ENCODE measurements at regions of chr12 and their contacts with region 1.

Region 1: GRCh38 chr12:50734409-50735263 is 29.3 kb upstream of the ATF1 start:
- DNase-seq: peak; percentile 27
- H3K4me3 Mint-ChIP-seq: no peak overlapping the region
- H3K27ac Mint-ChIP-seq: no peak overlapping the region
- H3K4me1 Mint-ChIP-seq: no peaks in the 10 kb centered on the region
- H3K27me3 Mint-ChIP-seq: no peaks in the 10 kb centered on the region

Region 2: DNA sequence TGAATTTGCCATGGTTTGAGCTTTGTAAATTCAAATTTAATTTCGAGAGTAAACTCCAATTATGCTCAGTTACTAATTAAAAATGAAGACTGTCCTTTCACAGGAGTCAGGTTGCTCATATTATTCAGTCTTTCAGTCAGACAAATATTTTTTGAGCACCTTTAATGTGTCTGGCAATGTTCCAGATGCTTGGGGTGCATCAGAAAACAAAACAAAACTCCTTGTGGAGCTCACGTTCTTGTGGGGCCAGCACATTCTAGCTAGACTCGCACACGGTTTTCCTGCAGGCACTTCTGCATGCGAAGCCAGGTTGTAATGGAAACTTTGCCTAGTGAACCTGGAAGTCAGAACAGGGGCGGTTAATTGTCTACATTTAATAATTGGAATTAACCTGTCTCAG is 34.7 kb before region 1 on chr12:
- CTCF ChIA-PET with region 1: no interaction called
- POLR2A ChIA-PET with region 1: no interaction called
- DNase-seq: no peak
- H3K4me3 Mint-ChIP-seq: no peak overlapping the region
- H3K27ac Mint-ChIP-seq: no peak overlapping the region
- H3K4me1 Mint-ChIP-seq: no peaks in the 10 kb centered on the region
- H3K27me3 Mint-ChIP-seq: no peaks in the 10 kb centered on the region

Region 3: GRCh38 chr12:50806176-50806575 is 71.5 kb after region 1 on chr12:
- CTCF ChIA-PET with region 1: no interaction called
- POLR2A ChIA-PET with region 1: interaction called, 17 read pairs
- DNase-seq: no peak
- H3K4me3 Mint-ChIP-seq: no peak overlapping the region
- H3K27ac Mint-ChIP-seq: no peak overlapping the region
- H3K4me1 Mint-ChIP-seq: no peaks in the 10 kb centered on the region
- H3K27me3 Mint-ChIP-seq: no peaks in the 10 kb centered on the region